Sigmoid colon (tissue), 7 donors: ENCODE measurements at regions of chr17 and their contacts with region 1.

Region 1: GRCh38 chr17:28726226-28727130 is at the start of gene TLCD1:
- DNase-seq: peak; percentile 96
- H3K4me3 ChIP-seq: peak within 1 kb of the TSS; percentile 51 to 83 (median 68)
- H3K27ac ChIP-seq: peak within 1 kb of the TSS; percentile 88 to 97 (median 96)
- H3K4me1 ChIP-seq: peaks cover 0 to 47% (median 41%) of the 10 kb centered on the region in 4 donors
- H3K27me3 ChIP-seq: peaks cover 0 to 8% (median 0%) of the 10 kb centered on the region in 3 donors
- CTCF ChIP-seq: peak; percentile 99 to 100 (median 100)
- EP300 ChIP-seq: no peak
- POLR2A ChIP-seq: no peak
- total RNA-seq, gene TLCD1: 0.66 to 0.71 TPM in 2 of 4 donors, not detected in the others

Region 2: GRCh38 chr17:28743225-28744103 is 17.0 kb after region 1 on chr17 and contains the start of gene TRAF4:
- intact Hi-C with region 1: loop called (anchors 1 kb)
- DNase-seq: peak; percentile 86
- H3K4me3 ChIP-seq: peak within 1 kb of the TSS; percentile 64 to 78 (median 72)
- H3K27ac ChIP-seq: peak within 1 kb of the TSS; percentile 84 to 91 (median 89)
- H3K4me1 ChIP-seq: peaks cover 0 to 42% (median 41%) of the 10 kb centered on the region in 4 donors
- H3K27me3 ChIP-seq: no peaks in the 10 kb centered on the region
- CTCF ChIP-seq: no peak
- EP300 ChIP-seq: no peak
- POLR2A ChIP-seq: peak in 1 of 2 donors; percentile 20
- total RNA-seq, gene TRAF4: 3.9 to 11.6 (median 5.1) TPM

Region 3: GRCh38 chr17:28750178-28751047 is 23.9 kb after region 1 on chr17:
- intact Hi-C with region 1: loop called (anchors 1 kb)
- DNase-seq: peak; percentile 96
- H3K4me3 ChIP-seq: no peak overlapping the region
- H3K27ac ChIP-seq: no peak overlapping the region
- H3K4me1 ChIP-seq: peaks cover 0 to 25% (median 19%) of the 10 kb centered on the region in 4 donors
- H3K27me3 ChIP-seq: no peaks in the 10 kb centered on the region
- CTCF ChIP-seq: peak; percentile 99 to 100 (median 100)
- EP300 ChIP-seq: no peak
- POLR2A ChIP-seq: no peak

Region 4: GRCh38 chr17:28812091-28812747 is 85.7 kb after region 1 on chr17:
- intact Hi-C with region 1: loop called (anchors 5 kb)
- DNase-seq: peak; percentile 99
- H3K4me3 ChIP-seq: peak overlapping the region; percentile 63 to 97 (median 76)
- H3K27ac ChIP-seq: peak overlapping the region; percentile 87 to 95 (median 88)
- H3K4me1 ChIP-seq: peaks cover 0 to 46% (median 40%) of the 10 kb centered on the region in 4 donors
- H3K27me3 ChIP-seq: no peaks in the 10 kb centered on the region
- CTCF ChIP-seq: no peak
- EP300 ChIP-seq: no peak
- POLR2A ChIP-seq: peak in 1 of 2 donors; percentile 19

Region 5: DNA sequence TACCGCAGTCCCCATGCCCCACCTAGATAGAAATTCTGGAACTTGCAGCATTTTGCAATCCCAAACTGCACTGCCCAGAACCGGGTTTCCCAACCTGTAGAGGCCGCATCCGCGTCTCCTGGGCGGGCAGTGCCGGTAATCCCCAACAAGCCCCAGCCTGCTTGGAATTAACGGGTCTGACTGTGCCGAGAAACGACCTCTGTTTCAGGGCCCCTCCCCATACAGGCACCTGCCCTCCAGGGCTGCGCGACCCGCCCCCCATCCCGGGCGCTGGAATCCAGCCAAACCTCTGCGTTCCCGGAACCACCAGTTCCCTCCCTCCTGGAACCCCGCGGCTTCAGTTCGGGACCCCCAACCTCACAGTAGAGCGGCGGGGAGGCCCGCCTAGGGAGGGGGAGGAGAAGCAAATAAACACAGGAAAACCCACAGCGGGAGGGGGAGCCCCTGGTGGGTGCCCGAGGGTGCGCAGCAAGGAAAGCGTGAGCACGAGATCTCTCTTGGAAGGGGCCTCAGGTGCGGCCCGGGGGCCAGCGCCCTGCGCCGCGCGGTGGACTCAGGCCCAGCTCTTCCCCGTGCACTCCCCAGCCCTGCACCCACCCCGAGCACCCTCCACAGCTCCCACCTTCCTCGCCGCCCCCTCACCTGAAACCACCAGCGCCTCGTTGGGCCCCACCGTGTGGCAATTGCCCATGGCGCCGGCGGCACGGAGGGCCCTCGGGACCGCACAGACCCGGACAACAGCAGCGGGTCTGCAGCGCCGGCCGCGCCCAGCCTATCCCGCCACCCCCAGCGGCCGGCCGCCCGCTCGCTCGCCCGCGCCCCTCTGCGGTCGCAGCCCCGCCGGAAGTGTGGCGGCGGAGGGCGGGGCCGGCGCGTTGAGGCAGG is 170.6 kb after region 1 on chr17 and contains the start of gene FLOT2:
- intact Hi-C with region 1: loop called (anchors 5 kb)
- DNase-seq: peak; percentile 87
- H3K4me3 ChIP-seq: peak within 1 kb of the TSS; percentile 69 to 93 (median 83)
- H3K27ac ChIP-seq: peak within 1 kb of the TSS; percentile 82 to 96 (median 92)
- H3K4me1 ChIP-seq: peaks cover 0 to 35% (median 29%) of the 10 kb centered on the region in 4 donors
- H3K27me3 ChIP-seq: no peaks in the 10 kb centered on the region
- CTCF ChIP-seq: peak in 3 of 4 experiments; percentile 12 to 34 (median 27)
- EP300 ChIP-seq: peak in 2 of 4 donors; percentile 10 to 61
- POLR2A ChIP-seq: no peak
- total RNA-seq, gene FLOT2: 38.5 to 72.5 (median 52.4) TPM

Region 6: DNA sequence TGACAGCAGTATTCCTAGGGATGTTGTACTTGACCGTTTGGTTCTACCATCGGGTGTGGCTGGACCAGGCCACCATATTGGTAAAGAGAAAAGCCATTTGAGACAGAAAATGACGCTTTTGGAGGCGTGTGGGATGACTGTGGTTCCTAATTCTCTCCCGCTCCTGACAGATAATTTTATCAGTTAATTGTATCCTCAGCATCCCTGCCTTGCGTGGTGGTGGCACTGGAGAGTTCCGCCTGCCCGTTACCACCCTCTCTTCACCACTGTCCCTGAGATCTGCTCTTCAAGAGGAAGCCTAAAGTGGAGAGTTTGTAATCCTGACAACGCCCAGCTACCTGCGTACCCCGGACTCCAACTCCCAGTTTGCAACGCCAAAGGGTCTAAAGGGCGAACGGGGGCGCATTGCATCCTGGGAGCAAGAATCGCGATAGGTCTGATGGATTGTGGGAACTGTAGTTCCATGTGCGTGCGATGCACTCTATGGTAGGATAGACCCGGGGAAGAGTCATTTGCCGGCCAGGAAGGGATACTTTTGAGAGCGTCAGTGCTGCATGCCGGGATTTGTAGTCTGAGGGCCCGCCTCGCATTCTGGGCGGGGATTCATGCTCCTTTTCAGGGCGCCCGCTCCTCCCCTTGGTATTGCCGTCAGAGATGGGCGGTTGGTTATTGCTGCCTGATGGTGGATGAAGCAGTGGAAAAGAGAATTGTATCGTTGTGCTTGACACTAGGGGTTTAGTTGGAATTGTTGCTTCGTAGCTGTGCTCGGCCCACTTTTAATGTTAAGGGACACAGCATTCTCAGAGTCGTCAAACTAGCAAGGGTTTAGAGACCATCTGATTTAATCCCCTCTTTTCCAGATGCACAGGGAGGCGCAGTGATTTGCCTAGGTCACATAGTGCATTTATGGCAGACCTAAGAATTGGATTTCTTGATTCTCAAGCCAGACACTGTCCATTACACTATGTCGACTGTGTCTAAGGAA is 225.8 kb after region 1 on chr17:
- intact Hi-C with region 1: loop called (anchors 2 kb)
- DNase-seq: peak; percentile 99
- H3K4me3 ChIP-seq: peak overlapping the region; percentile 40 to 96 (median 74)
- H3K27ac ChIP-seq: peak overlapping the region; percentile 90 to 97 (median 94)
- H3K4me1 ChIP-seq: peaks cover 0 to 27% (median 14%) of the 10 kb centered on the region in 4 donors
- H3K27me3 ChIP-seq: no peaks in the 10 kb centered on the region
- CTCF ChIP-seq: no peak
- EP300 ChIP-seq: peak in 1 of 4 donors; percentile 52
- POLR2A ChIP-seq: peak in 1 of 2 donors; percentile 4

Region 7: GRCh38 chr17:29293890-29294579 is 567.6 kb after region 1 on chr17 and contains the start of gene NUFIP2:
- intact Hi-C with region 1: loop called (anchors 10 kb)
- DNase-seq: peak; percentile 100
- H3K4me3 ChIP-seq: peak within 1 kb of the TSS; percentile 87 to 98 (median 92)
- H3K27ac ChIP-seq: peak within 1 kb of the TSS; percentile 96 to 100 (median 100)
- H3K4me1 ChIP-seq: peaks cover 0 to 36% (median 35%) of the 10 kb centered on the region in 4 donors
- H3K27me3 ChIP-seq: no peaks in the 10 kb centered on the region
- CTCF ChIP-seq: no peak
- EP300 ChIP-seq: no peak
- POLR2A ChIP-seq: peak; percentile 99 to 100
- total RNA-seq, gene NUFIP2: 26.5 to 30.7 (median 27.4) TPM